ENCODE measurements at regions of chr15 and their contacts with region 1.

Region 1: GRCh38 chr15:32029862-32030781 is at the start of gene CHRNA7:
- DNase-seq: peak; percentile 71
- H3K4me3 ChIP-seq: peak within 1 kb of the TSS; percentile 38 to 71 (median 60)
- H3K27ac ChIP-seq: peak within 1 kb of the TSS in 3 of 4 donors; percentile 43 to 50 (median 50)
- H3K4me1 ChIP-seq: peaks cover 0 to 19% (median 18%) of the 10 kb centered on the region in 4 donors
- H3K27me3 ChIP-seq: peaks cover 0 to 38% (median 0%) of the 10 kb centered on the region in 3 donors
- CTCF ChIP-seq: peak in 3 of 4 experiments; percentile 9 to 23 (median 22)
- EP300 ChIP-seq: no peak
- POLR2A ChIP-seq: no peak
- total RNA-seq, gene CHRNA7: 0.54 to 3.9 (median 1.0) TPM

Region 2: GRCh38 chr15:31870328-31871165 is 159.6 kb before region 1 on chr15:
- intact Hi-C with region 1: loop called (anchors 5 kb)
- DNase-seq: peak; percentile 89
- H3K4me3 ChIP-seq: peak within 1 kb of the TSS; percentile 44 to 70 (median 67)
- H3K27ac ChIP-seq: peak within 1 kb of the TSS; percentile 81 to 84 (median 82)
- H3K4me1 ChIP-seq: peaks cover 0 to 12% (median 6%) of the 10 kb centered on the region in 4 donors
- H3K27me3 ChIP-seq: no peaks in the 10 kb centered on the region
- CTCF ChIP-seq: no peak
- EP300 ChIP-seq: no peak
- POLR2A ChIP-seq: no peak

Region 3: GRCh38 chr15:31977812-31978661 is 52.1 kb before region 1 on chr15:
- intact Hi-C with region 1: loop called (anchors 5 kb)
- DNase-seq: no peak
- H3K4me3 ChIP-seq: no peak overlapping the region
- H3K27ac ChIP-seq: no peak overlapping the region
- H3K4me1 ChIP-seq: peaks cover 0 to 16% (median 5%) of the 10 kb centered on the region in 4 donors
- H3K27me3 ChIP-seq: peaks cover 0 to 34% (median 28%) of the 10 kb centered on the region in 3 donors
- CTCF ChIP-seq: peak; percentile 17 to 68 (median 66)
- EP300 ChIP-seq: no peak
- POLR2A ChIP-seq: no peak

Measured in sigmoid colon (tissue), 7 donors.